ENCODE measurements at regions of chr1 and their contacts with region 1.

Region 1: DNA sequence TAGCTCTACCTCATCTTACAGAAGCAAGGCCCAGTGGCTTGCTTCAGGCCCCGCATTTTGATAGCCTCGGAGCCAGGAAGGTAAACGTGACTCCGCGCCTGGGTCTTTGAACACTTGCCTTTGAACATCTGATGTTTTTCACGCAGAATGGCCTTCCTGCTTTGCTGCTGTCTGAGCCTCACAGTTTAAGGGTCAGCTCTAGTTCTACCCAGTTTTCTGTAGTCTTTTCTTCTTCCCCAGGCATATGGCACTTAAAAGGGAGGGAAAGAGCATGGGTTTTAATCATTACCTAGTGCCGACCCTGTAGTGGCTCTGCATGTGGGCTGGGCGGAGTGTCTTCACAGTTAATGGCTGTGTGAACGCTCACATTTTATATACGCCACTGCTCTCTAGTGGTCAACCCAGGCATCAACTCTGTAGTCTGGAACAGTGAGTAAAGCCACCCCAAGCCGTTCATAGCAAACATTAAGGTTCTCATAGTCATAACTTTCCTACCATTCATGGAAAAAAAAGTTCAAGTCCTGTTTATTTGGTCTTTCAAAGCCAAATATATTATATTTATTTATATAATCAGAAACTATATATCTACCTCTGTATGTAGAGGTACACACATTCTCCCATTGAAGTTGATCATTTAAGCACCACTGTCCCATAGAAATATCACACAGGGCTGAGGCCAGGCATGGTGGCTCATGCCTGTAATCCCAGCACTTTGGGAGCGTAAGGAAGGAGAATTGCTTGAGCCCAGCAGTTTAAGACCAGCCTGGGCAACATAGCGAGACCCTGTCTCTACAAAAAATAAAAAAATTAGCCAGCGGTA is 78.1 kb downstream of the IER5 start:
- DNase-seq: no peak
- ATAC-seq: peak; percentile 100
- H3K4me3 ChIP-seq: no peak overlapping the region
- H3K27ac ChIP-seq: no peak overlapping the region
- H3K4me1 ChIP-seq: no peaks in the 10 kb centered on the region
- H3K27me3 ChIP-seq: no peaks in the 10 kb centered on the region
- CTCF ChIP-seq: peak; percentile 83 to 88 (median 84)
- EP300 ChIP-seq: no peak
- POLR2A ChIP-seq: no peak
- RAD21 ChIP-seq: peak; percentile 94

Region 2: DNA sequence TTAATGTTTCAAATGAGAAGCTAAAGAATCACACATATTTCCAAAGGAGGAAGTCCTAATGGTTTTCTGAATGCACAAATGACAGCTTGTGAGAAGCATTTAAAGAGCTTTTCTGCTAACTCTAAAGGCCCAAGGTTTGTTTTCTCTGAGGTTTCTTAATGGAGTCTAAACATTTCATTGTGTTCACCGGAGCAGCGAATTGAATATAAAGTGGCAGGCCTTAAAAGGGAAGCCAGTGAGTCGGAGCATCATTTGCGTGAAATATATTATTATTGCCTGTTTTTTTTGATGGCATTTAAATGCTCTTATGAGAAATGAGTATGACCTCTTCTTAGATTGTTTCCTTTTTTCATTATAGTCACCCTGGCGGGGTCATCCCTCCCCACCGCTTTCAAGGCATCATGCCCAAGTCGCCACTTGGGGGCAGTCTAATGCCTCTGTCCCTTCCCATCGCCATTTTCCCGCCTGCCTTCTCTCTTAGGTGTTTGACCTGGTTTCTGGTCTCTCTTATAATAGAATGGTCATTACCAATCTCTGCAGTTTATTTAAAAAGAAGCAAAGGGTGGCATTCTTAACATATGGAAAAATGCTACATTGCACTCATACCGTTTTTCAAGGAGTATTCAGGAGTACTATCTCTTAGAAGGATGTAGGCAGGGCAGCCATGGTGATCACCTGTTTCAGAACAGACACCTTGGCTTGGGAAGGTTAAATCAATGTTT is 633.2 kb before region 1 on chr1:
- CTCF ChIA-PET with region 1: interaction called, 3 read pairs
- POLR2A ChIA-PET with region 1: no interaction called
- RAD21 ChIA-PET with region 1: interaction called, 3 read pairs
- SMC1A ChIA-PET with region 1: interaction called, 5 read pairs
- in situ Hi-C with region 1: loop called (anchors 10 kb)
- intact Hi-C with region 1: loop called (anchors 2 kb)
- DNase-seq: no peak
- ATAC-seq: peak; percentile 97
- H3K4me3 ChIP-seq: no peak overlapping the region
- H3K27ac ChIP-seq: no peak overlapping the region
- H3K4me1 ChIP-seq: no peaks in the 10 kb centered on the region
- H3K27me3 ChIP-seq: peaks cover 0 to 2% of the 10 kb centered on the region in 2 experiments; a peak in 2 of 4 replicates
- CTCF ChIP-seq: peak; percentile 82 to 95 (median 88)
- EP300 ChIP-seq: no peak
- POLR2A ChIP-seq: no peak
- RAD21 ChIP-seq: peak; percentile 91

Region 3: DNA sequence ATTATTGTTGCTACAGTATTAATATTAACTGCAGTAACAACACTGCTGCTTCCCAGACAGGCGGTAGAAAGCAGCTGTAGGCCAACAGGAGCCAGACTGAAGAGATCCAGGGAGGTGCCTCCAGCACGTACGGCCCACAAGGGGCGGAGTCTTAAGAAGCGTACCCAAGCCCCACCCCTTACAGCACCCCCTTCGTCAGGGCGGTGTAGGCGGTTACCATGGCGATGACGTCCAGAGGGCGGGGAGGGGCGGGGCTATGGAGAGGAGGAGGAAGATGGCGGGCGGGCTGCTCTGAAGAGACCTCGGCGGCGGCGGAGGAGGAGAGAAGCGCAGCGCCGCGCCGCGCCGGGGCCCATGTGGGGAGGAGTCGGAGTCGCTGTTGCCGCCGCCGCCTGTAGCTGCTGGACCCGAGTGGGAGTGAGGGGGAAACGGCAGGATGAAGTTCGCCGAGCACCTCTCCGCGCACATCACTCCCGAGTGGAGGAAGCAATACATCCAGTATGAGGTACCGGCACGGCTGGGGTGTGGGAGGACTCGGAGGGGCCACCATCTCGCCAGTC is 534.7 kb before region 1 on chr1 and contains the start of gene XPR1:
- CTCF ChIA-PET with region 1: interaction called, 3 read pairs
- POLR2A ChIA-PET with region 1: no interaction called
- RAD21 ChIA-PET with region 1: no interaction called
- SMC1A ChIA-PET with region 1: no interaction called
- in situ Hi-C with region 1: loop called (anchors 25 kb)
- intact Hi-C with region 1: no loop called
- DNase-seq: peak; percentile 95
- ATAC-seq: peak; percentile 96
- H3K4me3 ChIP-seq: peak within 1 kb of the TSS; percentile 89
- H3K27ac ChIP-seq: peak within 1 kb of the TSS; percentile 56
- H3K4me1 ChIP-seq: peaks cover 8% of the 10 kb centered on the region
- H3K27me3 ChIP-seq: no peaks in the 10 kb centered on the region
- CTCF ChIP-seq: peak; percentile 9 to 16 (median 10); a peak in 1 of 6 replicates
- EP300 ChIP-seq: no peak
- POLR2A ChIP-seq: peak; percentile 88
- RAD21 ChIP-seq: peak; percentile 26; the same call in 1 of the 2 replicates
- polyA plus RNA-seq, gene XPR1: 1.1 to 1.5 TPM

Region 4: GRCh38 chr1:180662709-180663108 is 503.9 kb before region 1 on chr1:
- CTCF ChIA-PET with region 1: no interaction called
- POLR2A ChIA-PET with region 1: no interaction called
- RAD21 ChIA-PET with region 1: no interaction called
- SMC1A ChIA-PET with region 1: no interaction called
- in situ Hi-C with region 1: no loop called
- intact Hi-C with region 1: no loop called
- DNase-seq: no peak
- ATAC-seq: no peak
- H3K4me3 ChIP-seq: no peak overlapping the region
- H3K27ac ChIP-seq: no peak overlapping the region
- H3K4me1 ChIP-seq: no peaks in the 10 kb centered on the region
- H3K27me3 ChIP-seq: no peaks in the 10 kb centered on the region
- CTCF ChIP-seq: no peak
- EP300 ChIP-seq: no peak
- POLR2A ChIP-seq: no peak
- RAD21 ChIP-seq: no peak

Region 5: DNA sequence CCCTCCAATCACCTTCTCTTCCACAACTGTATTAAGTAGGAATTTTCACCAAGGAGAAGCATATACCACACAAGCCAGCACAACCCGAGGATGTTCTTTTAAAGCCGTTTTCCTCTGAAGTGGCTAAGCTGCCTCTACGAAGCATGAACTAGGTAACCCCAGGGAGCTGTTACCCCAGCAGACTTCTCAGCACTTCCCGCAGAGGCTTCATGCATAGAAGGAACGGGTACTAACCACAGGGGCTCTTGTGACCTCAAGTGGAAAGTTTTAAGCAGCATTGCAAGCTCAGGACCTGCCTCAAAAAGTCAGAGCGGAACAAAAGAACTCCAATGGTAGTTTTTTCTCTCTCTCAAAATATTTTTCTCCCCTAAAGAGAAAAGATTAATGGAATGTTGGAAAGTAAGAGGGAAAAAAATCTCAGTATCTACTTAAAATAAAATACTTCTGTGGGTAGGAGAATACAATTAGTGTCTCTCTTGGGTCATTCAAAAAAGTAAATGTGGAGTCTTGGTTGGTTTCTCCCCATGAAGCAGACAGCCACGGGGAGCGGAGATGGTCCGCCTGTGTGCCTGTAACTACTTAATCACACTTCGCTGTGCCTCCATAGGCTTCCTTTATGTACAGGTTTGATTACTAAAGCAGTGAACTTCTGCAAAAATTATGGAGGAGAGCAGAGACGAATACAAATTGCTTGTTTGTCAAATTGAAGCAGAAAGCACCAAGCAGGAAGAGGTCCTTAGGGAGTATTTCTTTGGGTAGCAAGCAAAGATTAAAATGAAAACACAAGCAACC is 184.8 kb before region 1 on chr1:
- CTCF ChIA-PET with region 1: interaction called, 3 read pairs
- POLR2A ChIA-PET with region 1: no interaction called
- RAD21 ChIA-PET with region 1: no interaction called
- SMC1A ChIA-PET with region 1: interaction called, 11 read pairs
- in situ Hi-C with region 1: no loop called
- intact Hi-C with region 1: no loop called
- DNase-seq: peak; percentile 47
- ATAC-seq: peak; percentile 91
- H3K4me3 ChIP-seq: peak overlapping the region; percentile 19; the same call in 1 of the 2 replicates
- H3K27ac ChIP-seq: peak overlapping the region; percentile 65
- H3K4me1 ChIP-seq: peaks cover 8% of the 10 kb centered on the region; the same call in 1 of the 2 replicates
- H3K27me3 ChIP-seq: no peaks in the 10 kb centered on the region
- CTCF ChIP-seq: peak in 1 of 3 experiments; percentile 22; a peak in 1 of 6 replicates
- EP300 ChIP-seq: no peak
- POLR2A ChIP-seq: no peak
- RAD21 ChIP-seq: peak; percentile 32; the same call in 1 of the 2 replicates

Region 6: GRCh38 chr1:181079382-181079781 is 87.2 kb before region 1 on chr1:
- CTCF ChIA-PET with region 1: interaction called, 17 read pairs
- POLR2A ChIA-PET with region 1: interaction called, 3 read pairs
- RAD21 ChIA-PET with region 1: interaction called, 22 read pairs
- SMC1A ChIA-PET with region 1: interaction called, 16 read pairs
- in situ Hi-C with region 1: no loop called
- intact Hi-C with region 1: loop called (anchors 1 kb)
- DNase-seq: no peak
- ATAC-seq: no peak
- H3K4me3 ChIP-seq: no peak overlapping the region
- H3K27ac ChIP-seq: no peak overlapping the region
- H3K4me1 ChIP-seq: peaks cover 38% of the 10 kb centered on the region
- H3K27me3 ChIP-seq: no peaks in the 10 kb centered on the region
- CTCF ChIP-seq: no peak
- EP300 ChIP-seq: no peak
- POLR2A ChIP-seq: no peak
- RAD21 ChIP-seq: no peak

Region 7: GRCh38 chr1:181152892-181153633 is 13.5 kb before region 1 on chr1:
- CTCF ChIA-PET with region 1: interaction called, 26 read pairs
- POLR2A ChIA-PET with region 1: interaction called, 4 read pairs
- RAD21 ChIA-PET with region 1: interaction called, 11 read pairs
- SMC1A ChIA-PET with region 1: interaction called, 31 read pairs
- in situ Hi-C with region 1: no loop called
- intact Hi-C with region 1: no loop called
- DNase-seq: no peak
- ATAC-seq: peak; percentile 88
- H3K4me3 ChIP-seq: no peak overlapping the region
- H3K27ac ChIP-seq: peak overlapping the region; percentile 62
- H3K4me1 ChIP-seq: peaks cover 48% of the 10 kb centered on the region
- H3K27me3 ChIP-seq: no peaks in the 10 kb centered on the region
- CTCF ChIP-seq: peak; percentile 19 to 40 (median 40); a peak in 4 of 6 replicates
- EP300 ChIP-seq: peak; percentile 57 to 68; a peak in 2 of 4 replicates
- POLR2A ChIP-seq: peak; percentile 61
- RAD21 ChIP-seq: peak; percentile 41; the same call in 1 of the 2 replicates

Region 8: DNA sequence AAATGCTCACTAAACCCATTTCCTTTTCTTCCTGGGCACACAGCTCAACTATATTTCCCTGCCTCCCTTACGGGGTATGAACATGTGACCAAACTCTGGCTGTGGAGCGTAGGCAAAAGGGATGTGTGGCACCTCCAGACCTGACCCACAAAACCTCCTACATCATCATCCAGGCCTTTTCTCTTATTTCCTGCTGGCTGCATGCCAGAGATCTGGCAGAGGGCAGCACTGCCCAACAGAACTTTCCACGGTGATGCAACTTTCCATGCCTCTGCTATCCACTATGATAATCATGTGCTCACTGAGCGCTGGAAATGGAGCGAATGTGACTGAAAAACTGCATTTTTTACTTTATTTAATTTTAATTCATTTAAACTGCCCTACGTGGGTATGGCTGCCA is 217.1 kb after region 1 on chr1:
- CTCF ChIA-PET with region 1: no interaction called
- POLR2A ChIA-PET with region 1: no interaction called
- RAD21 ChIA-PET with region 1: no interaction called
- SMC1A ChIA-PET with region 1: no interaction called
- in situ Hi-C with region 1: no loop called
- intact Hi-C with region 1: no loop called
- DNase-seq: no peak
- ATAC-seq: no peak
- H3K4me3 ChIP-seq: no peak overlapping the region
- H3K27ac ChIP-seq: no peak overlapping the region
- H3K4me1 ChIP-seq: no peaks in the 10 kb centered on the region
- H3K27me3 ChIP-seq: no peaks in the 10 kb centered on the region
- CTCF ChIP-seq: no peak
- EP300 ChIP-seq: no peak
- POLR2A ChIP-seq: no peak
- RAD21 ChIP-seq: no peak